Sciatic nerve (tissue), 2 donors: ENCODE measurements at regions of chr1 and their contacts with region 1.

Region 1: GRCh38 chr1:84582802-84583587 is 8.8 kb upstream of the CTBS start:
- DNase-seq: no peak
- ATAC-seq: no peak

Region 2: DNA sequence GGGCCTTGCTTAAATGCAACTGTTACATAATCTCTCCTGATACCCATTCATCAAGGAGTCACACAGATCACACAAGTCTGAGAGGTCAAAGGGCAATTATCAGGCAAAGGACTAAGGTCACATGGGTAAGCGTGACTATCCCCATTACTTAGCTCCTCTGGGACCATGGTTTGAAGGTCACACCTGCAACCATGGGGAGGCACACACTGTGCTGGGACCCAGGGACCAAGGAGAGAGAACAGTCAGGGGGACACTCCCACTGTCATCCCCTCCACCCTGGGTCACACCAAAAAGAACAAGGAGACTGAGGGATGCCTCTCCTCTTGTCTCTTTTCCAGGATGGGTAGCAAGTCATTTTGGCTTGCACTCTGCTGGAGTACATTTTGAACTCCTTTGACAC is 22.2 kb after region 1 on chr1:
- intact Hi-C with region 1: loop called (anchors 1 kb)
- DNase-seq: no peak
- ATAC-seq: no peak